T-cell (primary cell): ENCODE measurements at regions of chr3 and their contacts with region 1.

Region 1: GRCh38 chr3:39855517-39855916 is 46.1 kb downstream of the MYRIP start:
- DNase-seq: no peak
- ATAC-seq: no peak
- H3K4me3 ChIP-seq: no peak overlapping the region
- H3K4me3 Mint-ChIP-seq: no peak overlapping the region
- H3K27ac ChIP-seq: no peak overlapping the region
- H3K27ac Mint-ChIP-seq: no peak overlapping the region
- H3K4me1 ChIP-seq: no peaks in the 10 kb centered on the region
- H3K4me1 Mint-ChIP-seq: no peaks in the 10 kb centered on the region
- H3K27me3 ChIP-seq: peaks cover 0 to 12% of the 10 kb centered on the region in 2 experiments
- H3K27me3 Mint-ChIP-seq: peaks cover 4 to 8% of the 10 kb centered on the region in 2 donors

Region 2: GRCh38 chr3:39657075-39657474 is 198.4 kb before region 1 on chr3:
- CTCF ChIA-PET with region 1: no interaction called
- POLR2A ChIA-PET with region 1: no interaction called
- DNase-seq: no peak
- ATAC-seq: no peak
- H3K4me3 ChIP-seq: no peak overlapping the region
- H3K4me3 Mint-ChIP-seq: no peak overlapping the region
- H3K27ac ChIP-seq: no peak overlapping the region
- H3K27ac Mint-ChIP-seq: no peak overlapping the region
- H3K4me1 ChIP-seq: no peaks in the 10 kb centered on the region
- H3K4me1 Mint-ChIP-seq: no peaks in the 10 kb centered on the region
- H3K27me3 ChIP-seq: no peaks in the 10 kb centered on the region
- H3K27me3 Mint-ChIP-seq: peaks cover 8 to 14% of the 10 kb centered on the region in 2 donors

Region 3: DNA sequence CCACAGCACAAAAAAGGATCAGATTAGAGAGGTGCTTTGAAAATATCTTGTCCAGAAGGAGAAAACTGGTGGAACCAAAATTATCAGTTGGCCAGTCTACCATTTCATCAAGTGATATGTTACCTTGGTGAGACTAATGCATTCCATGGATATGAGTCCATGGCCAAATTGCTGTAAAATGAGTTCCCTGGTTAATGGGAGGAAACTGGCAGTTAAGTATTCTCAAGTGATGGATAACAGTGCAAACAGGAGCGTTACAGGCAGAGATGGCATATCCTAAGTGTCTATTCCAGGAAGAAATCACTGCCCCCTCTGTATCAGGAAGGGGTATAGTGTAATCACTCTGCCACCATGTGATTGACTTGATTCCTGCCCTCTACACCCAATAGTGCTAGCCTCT is 12.1 kb before region 1 on chr3:
- CTCF ChIA-PET with region 1: no interaction called
- POLR2A ChIA-PET with region 1: no interaction called
- DNase-seq: no peak
- ATAC-seq: no peak
- H3K4me3 ChIP-seq: no peak overlapping the region
- H3K4me3 Mint-ChIP-seq: no peak overlapping the region
- H3K27ac ChIP-seq: no peak overlapping the region
- H3K27ac Mint-ChIP-seq: no peak overlapping the region
- H3K4me1 ChIP-seq: no peaks in the 10 kb centered on the region
- H3K4me1 Mint-ChIP-seq: no peaks in the 10 kb centered on the region
- H3K27me3 ChIP-seq: peaks cover 0 to 7% of the 10 kb centered on the region in 2 experiments
- H3K27me3 Mint-ChIP-seq: peaks cover 2 to 10% of the 10 kb centered on the region in 2 donors

Region 4: GRCh38 chr3:39892068-39892467 is 36.6 kb after region 1 on chr3:
- CTCF ChIA-PET with region 1: no interaction called
- POLR2A ChIA-PET with region 1: interaction called in 1 of 2 experiments, 14 read pairs
- DNase-seq: no peak
- ATAC-seq: no peak
- H3K4me3 ChIP-seq: no peak overlapping the region
- H3K4me3 Mint-ChIP-seq: no peak overlapping the region
- H3K27ac ChIP-seq: no peak overlapping the region
- H3K27ac Mint-ChIP-seq: no peak overlapping the region
- H3K4me1 ChIP-seq: no peaks in the 10 kb centered on the region
- H3K4me1 Mint-ChIP-seq: no peaks in the 10 kb centered on the region
- H3K27me3 ChIP-seq: no peaks in the 10 kb centered on the region
- H3K27me3 Mint-ChIP-seq: no peaks in the 10 kb centered on the region